Common myeloid progenitor, CD34-positive (primary cell): ENCODE measurements at regions of chr6 and their contacts with region 1.

Region 1: GRCh38 chr6:44475779-44476434 is 88.4 kb downstream of the CDC5L start:
- DNase-seq: peak; percentile 54 to 75 (median 74)
- H3K4me3 ChIP-seq: peak overlapping the region in 2 of 7 experiments; percentile 7 to 41
- H3K27ac ChIP-seq: no peak overlapping the region
- H3K4me1 ChIP-seq: peaks cover 0 to 27% (median 20%) of the 10 kb centered on the region in 4 experiments
- H3K27me3 ChIP-seq: no peaks in the 10 kb centered on the region

Region 2: DNA sequence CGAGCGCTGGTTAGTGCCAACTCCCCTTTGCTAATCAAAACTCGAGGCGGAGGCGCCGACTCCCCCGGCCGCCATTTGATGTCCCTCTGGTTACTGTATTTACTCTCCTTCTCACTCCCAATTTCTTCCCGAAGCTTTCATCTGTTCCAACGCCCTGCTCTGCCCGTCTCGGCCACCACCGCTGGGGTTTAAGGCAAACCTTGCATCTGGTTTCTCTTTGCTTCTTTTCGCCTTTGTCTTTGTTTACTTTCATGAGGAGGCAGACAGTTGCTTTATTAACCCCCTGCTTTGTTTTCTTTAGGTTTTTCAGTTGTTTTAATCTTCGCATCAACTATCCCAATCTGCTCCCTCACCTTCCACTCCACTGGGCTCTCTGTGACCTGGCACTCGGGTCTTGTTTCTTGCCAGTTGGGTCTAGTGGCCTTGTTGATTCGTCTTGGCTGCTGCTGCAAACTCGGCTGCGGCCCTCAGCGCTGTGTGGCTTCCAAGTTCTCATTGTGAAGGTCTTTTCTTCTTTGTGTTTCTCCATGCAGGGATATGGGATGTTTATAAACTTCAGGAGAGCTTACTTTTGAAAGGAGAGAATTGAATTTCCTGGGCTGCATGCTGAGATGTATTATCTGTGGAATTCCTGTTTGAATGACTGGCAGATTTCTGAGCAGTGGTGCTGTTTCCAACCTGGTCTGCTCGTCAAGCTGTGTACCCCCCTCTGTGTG is 66.7 kb after region 1 on chr6:
- CTCF ChIA-PET with region 1: interaction called, 10 read pairs
- POLR2A ChIA-PET with region 1: no interaction called
- DNase-seq: no peak
- H3K4me3 ChIP-seq: no peak overlapping the region
- H3K27ac ChIP-seq: no peak overlapping the region
- H3K4me1 ChIP-seq: peaks cover 0 to 2% (median 1%) of the 10 kb centered on the region in 4 experiments
- H3K27me3 ChIP-seq: no peaks in the 10 kb centered on the region

Region 3: DNA sequence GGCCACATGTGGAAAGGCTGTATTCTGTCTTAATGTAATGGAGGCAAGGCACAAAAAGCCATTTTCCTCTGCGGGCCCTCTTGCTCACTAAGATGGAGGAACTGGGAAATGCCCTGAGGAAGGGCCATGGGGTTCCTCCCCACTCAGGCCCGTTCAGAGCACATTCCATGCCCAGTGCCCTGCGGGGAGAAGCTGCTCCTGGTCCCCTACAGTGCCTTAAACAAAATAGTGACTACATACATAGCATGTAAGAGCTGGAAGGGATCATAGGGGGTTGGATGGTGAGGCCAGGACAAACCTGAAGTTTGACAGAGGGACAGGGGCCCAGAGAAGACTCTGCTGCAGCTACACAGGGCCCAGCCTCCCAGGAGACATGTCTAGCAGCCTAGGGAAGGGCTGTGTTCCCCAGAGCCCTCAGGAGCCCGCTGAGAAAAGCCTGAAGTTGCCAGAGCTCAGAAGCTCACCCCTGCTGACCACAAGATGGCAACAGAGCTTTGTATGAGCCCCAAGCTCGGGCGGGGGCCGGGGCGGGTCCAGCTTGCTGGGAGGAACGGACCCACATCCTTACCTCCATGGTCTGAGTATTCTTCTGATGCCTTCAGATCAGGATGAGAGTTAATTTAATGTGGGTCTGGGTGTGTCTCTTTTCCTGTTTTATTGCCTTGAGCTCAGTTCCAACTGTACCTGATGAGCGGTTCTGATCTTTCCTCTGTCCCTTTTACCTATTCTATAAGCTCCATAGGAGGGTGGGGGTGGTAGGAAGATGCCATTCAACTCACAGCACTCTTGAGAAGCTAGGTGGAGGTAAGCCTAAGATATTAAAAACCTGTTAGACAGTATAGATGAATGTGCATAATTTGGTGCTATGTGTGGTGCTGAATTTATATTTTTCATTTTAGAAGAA is 154.5 kb after region 1 on chr6:
- CTCF ChIA-PET with region 1: interaction called, 23 read pairs
- POLR2A ChIA-PET with region 1: interaction called, 3 read pairs
- DNase-seq: peak; percentile 55 to 67 (median 61)
- H3K4me3 ChIP-seq: no peak overlapping the region
- H3K27ac ChIP-seq: no peak overlapping the region
- H3K4me1 ChIP-seq: peaks cover 0 to 12% (median 10%) of the 10 kb centered on the region in 4 experiments
- H3K27me3 ChIP-seq: no peaks in the 10 kb centered on the region

Region 4: GRCh38 chr6:44655412-44656342 is 179.8 kb after region 1 on chr6:
- CTCF ChIA-PET with region 1: interaction called, 39 read pairs
- POLR2A ChIA-PET with region 1: no interaction called
- DNase-seq: peak; percentile 75 to 88 (median 87)
- H3K4me3 ChIP-seq: peak overlapping the region in 3 of 7 experiments; percentile 27 to 53 (median 35)
- H3K27ac ChIP-seq: no peak overlapping the region
- H3K4me1 ChIP-seq: peaks cover 0 to 23% (median 16%) of the 10 kb centered on the region in 4 experiments
- H3K27me3 ChIP-seq: no peaks in the 10 kb centered on the region

Region 5: DNA sequence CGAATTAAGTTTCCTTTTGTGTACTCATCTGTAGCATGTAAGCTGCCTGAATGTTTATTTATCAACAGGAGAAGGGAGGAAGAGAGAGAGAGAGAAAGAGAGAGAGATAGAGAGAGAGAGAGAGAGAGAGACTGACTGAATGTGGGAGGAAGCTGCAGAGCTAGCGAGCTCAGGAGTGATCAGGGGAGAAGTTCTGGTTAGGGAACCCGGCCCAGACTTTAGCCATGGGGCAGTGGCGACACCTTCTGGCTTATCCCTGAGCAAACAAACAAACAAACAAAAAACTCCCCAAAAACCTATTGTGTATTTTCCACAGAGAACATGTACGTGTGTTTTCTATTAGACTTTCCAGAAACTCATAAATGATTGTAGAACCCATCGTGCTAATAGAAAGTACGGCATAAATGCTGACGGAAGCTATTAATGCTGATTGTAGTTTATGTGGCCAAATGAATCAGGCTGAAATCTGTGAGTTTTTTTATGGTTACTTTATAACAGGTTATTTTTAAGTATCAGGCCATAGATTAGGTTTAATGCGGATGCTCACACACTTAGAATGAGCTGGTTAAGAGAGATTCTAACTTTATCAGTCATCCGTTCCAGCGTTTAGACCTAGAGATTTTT is 1446.9 kb after region 1 on chr6:
- CTCF ChIA-PET with region 1: interaction called, 41 read pairs
- POLR2A ChIA-PET with region 1: no interaction called
- DNase-seq: peak; percentile 82 to 86 (median 86)
- H3K4me3 ChIP-seq: no peak overlapping the region
- H3K27ac ChIP-seq: no peak overlapping the region
- H3K4me1 ChIP-seq: peaks cover 0 to 9% (median 5%) of the 10 kb centered on the region in 4 experiments
- H3K27me3 ChIP-seq: no peaks in the 10 kb centered on the region